ENCODE measurements at regions of chr18 and their contacts with region 1.

Region 1: GRCh38 chr18:57881818-57882413 is 78.8 kb upstream of the ATP8B1 start:
- DNase-seq: peak; percentile 61
- H3K4me3 ChIP-seq: no peak overlapping the region
- H3K27ac ChIP-seq: no peak overlapping the region
- H3K4me1 ChIP-seq: no peaks in the 10 kb centered on the region
- H3K27me3 ChIP-seq: no peaks in the 10 kb centered on the region
- CTCF ChIP-seq: peak; percentile 97

Region 2: GRCh38 chr18:57863706-57864105 is 18.2 kb before region 1 on chr18:
- CTCF ChIA-PET with region 1: no interaction called
- dilution Hi-C with region 1: no loop called
- in situ Hi-C with region 1: no loop called
- intact Hi-C with region 1: no loop called
- DNase-seq: peak; percentile 30
- H3K4me3 ChIP-seq: no peak overlapping the region
- H3K27ac ChIP-seq: no peak overlapping the region
- H3K4me1 ChIP-seq: no peaks in the 10 kb centered on the region
- H3K27me3 ChIP-seq: no peaks in the 10 kb centered on the region
- CTCF ChIP-seq: no peak

Region 3: DNA sequence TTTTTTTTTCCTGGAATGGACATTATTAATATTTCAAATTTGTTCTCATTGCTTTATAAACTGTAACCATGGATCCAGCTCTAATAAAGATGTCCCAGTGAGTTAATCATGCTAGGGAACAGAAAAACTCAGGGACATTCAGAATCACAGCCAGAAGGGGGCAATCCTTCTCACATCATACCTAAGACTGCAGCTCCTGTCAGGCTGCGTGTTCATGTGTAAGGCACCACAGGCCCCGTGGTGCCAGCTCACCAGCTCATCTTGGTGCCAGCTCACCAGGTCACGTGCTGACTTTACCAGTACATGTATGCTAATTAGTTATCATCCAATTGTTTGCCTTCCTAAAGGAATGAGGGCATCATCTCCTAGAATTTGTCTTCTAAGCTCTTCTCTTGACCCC is 77.4 kb after region 1 on chr18:
- CTCF ChIA-PET with region 1: no interaction called
- dilution Hi-C with region 1: no loop called
- in situ Hi-C with region 1: no loop called
- intact Hi-C with region 1: loop called (anchors 1 kb)
- DNase-seq: peak; percentile 72
- H3K4me3 ChIP-seq: no peak overlapping the region
- H3K27ac ChIP-seq: no peak overlapping the region
- H3K4me1 ChIP-seq: no peaks in the 10 kb centered on the region
- H3K27me3 ChIP-seq: no peaks in the 10 kb centered on the region
- CTCF ChIP-seq: peak; percentile 39 to 51

Region 4: GRCh38 chr18:58117786-58118403 is 236.0 kb after region 1 on chr18:
- CTCF ChIA-PET with region 1: interaction called, 17 read pairs
- dilution Hi-C with region 1: no loop called
- in situ Hi-C with region 1: no loop called
- intact Hi-C with region 1: loop called (anchors 1 kb)
- DNase-seq: peak; percentile 94
- H3K4me3 ChIP-seq: no peak overlapping the region
- H3K27ac ChIP-seq: peak overlapping the region; percentile 35
- H3K4me1 ChIP-seq: peaks cover 14% of the 10 kb centered on the region
- H3K27me3 ChIP-seq: no peaks in the 10 kb centered on the region
- CTCF ChIP-seq: no peak

Region 5: DNA sequence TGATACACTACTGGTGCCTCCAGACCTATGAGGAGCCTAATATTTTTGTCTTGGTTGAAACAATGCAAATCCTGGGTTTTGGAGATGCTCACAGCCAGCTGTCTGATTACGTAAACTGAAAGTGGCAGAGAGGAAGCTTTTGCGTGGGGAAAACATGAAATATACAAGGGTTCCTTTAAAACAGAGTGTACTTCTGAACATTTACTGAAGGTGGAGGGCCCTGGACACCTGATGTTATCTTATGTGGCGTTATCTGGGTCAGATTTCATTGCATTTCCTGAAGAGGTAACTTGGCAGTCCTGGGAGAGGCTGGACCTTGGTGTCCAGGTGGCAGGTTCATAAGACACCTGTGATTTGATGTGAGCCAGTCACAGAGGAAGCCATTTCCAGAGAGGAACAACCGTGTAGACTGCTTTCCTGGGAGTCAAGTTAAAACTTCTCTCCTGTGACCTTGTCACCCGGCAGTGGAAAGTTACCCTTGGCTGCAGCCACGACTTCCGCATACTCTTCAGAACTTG is 267.1 kb after region 1 on chr18:
- CTCF ChIA-PET with region 1: no interaction called
- dilution Hi-C with region 1: no loop called
- in situ Hi-C with region 1: no loop called
- intact Hi-C with region 1: no loop called
- DNase-seq: no peak
- H3K4me3 ChIP-seq: no peak overlapping the region
- H3K27ac ChIP-seq: no peak overlapping the region
- H3K4me1 ChIP-seq: no peaks in the 10 kb centered on the region
- H3K27me3 ChIP-seq: no peaks in the 10 kb centered on the region
- CTCF ChIP-seq: no peak

Region 6: GRCh38 chr18:58180738-58181353 is 298.9 kb after region 1 on chr18:
- CTCF ChIA-PET with region 1: no interaction called
- dilution Hi-C with region 1: no loop called
- in situ Hi-C with region 1: no loop called
- intact Hi-C with region 1: loop called (anchors 2 kb)
- DNase-seq: peak; percentile 37
- H3K4me3 ChIP-seq: no peak overlapping the region
- H3K27ac ChIP-seq: no peak overlapping the region
- H3K4me1 ChIP-seq: peaks cover 22% of the 10 kb centered on the region
- H3K27me3 ChIP-seq: no peaks in the 10 kb centered on the region
- CTCF ChIP-seq: peak; percentile 88 to 89

Region 7: DNA sequence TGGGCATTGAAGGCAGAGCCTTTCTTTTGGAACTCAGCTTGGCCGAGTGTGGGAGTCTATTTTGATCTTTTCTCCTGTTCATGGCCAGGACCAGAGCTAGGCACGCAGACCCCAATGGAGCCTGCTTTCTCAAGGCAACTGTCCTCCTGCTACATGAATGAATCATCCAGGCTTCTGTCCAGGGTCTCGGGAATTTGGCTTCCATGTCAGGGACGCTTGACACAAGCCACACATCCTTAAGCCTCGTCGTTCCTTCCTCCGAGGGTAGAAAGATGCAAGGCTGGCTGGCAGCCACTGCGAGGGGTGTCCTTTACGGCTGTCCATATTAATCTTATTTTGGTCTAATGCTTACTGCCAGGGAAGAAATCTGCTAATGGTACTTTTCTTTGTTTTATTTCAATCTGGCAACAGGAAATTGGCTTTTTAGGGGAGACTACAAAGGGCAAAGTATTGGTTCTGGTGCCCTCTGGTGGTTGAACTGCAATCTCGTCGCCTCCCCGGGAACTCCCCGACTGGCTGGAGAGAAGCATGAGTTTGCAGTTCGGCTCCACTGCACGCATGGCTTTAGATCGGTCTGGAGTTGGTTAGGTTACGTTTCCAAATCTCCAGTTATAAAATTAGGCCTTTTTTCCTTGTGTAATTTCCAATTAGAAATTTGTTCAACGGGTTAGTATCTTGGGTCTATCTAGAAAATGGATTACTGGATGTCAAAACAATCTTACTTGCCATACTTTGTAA is 611.8 kb after region 1 on chr18:
- CTCF ChIA-PET with region 1: no interaction called
- dilution Hi-C with region 1: no loop called
- in situ Hi-C with region 1: no loop called
- intact Hi-C with region 1: loop called (anchors 5 kb)
- DNase-seq: peak; percentile 58
- H3K4me3 ChIP-seq: no peak overlapping the region
- H3K27ac ChIP-seq: no peak overlapping the region
- H3K4me1 ChIP-seq: peaks cover 8% of the 10 kb centered on the region
- H3K27me3 ChIP-seq: no peaks in the 10 kb centered on the region
- CTCF ChIP-seq: peak; percentile 79 to 91